PC-3 (cell line): ENCODE measurements at regions of chr20 and their contacts with region 1.

Region 1: DNA sequence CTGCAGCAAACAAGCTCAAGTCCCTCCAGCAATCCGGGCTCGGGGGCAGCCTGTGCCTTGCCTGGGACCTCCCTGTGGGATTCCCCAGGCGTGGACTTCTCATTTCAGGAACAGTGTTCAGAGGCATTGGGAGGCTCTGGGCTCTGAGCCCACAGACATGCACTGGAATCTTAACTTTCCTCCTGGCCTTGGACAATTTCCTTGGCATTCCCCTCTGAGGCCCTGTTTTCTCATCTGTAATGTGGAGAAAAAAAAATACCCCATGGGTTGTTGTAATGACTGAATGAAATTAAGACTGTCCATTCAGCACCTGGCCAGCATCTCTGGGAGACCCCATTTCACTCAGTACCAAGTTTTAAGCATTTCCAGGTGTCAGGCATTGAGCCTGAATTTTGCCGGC is 17.6 kb downstream of the BPIFB4 start:
- DNase-seq: no peak
- ATAC-seq: no peak
- H3K4me3 ChIP-seq: no peak overlapping the region
- H3K27ac ChIP-seq: no peak overlapping the region
- H3K4me1 ChIP-seq: no peaks in the 10 kb centered on the region
- H3K27me3 ChIP-seq: peaks cover 6% of the 10 kb centered on the region; the same call in 1 of the 2 replicates
- CTCF ChIP-seq: no peak

Region 2: DNA sequence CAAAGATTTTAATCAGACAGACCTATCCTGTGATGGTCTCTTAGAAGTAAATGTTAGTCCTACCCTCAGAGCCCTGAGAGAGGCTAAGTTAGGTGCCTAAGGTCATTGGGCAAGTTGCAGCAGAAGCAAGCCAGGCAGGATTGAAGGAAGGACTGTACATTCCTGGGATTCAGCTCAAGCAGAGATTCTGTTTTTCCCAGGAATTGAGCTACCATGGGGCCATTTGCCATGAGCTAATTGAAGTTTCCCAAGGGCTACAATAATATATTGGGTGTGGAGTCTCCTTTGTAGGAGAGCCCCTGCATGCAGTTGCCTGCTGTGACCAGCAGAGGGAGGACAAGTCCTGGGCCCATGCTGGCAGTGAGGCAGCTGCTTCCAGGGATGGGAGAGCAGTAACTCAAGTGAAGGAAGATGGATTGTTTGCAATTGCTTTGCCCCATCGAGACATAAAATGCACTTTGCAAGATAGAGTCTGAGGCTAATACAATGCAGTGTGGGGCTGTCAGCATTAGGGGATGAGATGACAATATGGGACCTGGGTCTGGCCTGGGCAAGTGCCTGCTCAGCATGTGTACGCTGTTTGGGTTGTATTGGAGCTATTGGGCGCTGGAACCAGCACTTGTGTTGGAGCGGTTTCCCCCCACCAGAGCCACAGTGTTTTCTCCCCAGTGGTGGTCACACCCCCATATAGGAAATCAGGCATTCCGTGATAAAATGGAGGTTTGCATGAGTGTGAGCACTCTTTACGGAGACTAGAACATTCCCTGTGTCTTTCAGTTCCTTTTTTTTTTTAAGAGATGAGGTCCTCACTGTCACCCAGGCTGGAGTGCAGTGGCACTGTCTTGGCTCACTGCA is 306.9 kb before region 1 on chr20:
- CTCF ChIA-PET with region 1: no interaction called
- POLR2A ChIA-PET with region 1: no interaction called
- intact Hi-C with region 1: loop called (anchors 10 kb)
- DNase-seq: peak; percentile 79
- ATAC-seq: peak; percentile 100
- H3K4me3 ChIP-seq: no peak overlapping the region
- H3K27ac ChIP-seq: no peak overlapping the region
- H3K4me1 ChIP-seq: no peaks in the 10 kb centered on the region
- H3K27me3 ChIP-seq: no peaks in the 10 kb centered on the region
- CTCF ChIP-seq: peak; percentile 97

Region 3: GRCh38 chr20:33211817-33212424 is 114.9 kb after region 1 on chr20:
- CTCF ChIA-PET with region 1: interaction called, 4 read pairs
- POLR2A ChIA-PET with region 1: no interaction called
- intact Hi-C with region 1: loop called (anchors 1 kb)
- DNase-seq: peak; percentile 69
- ATAC-seq: peak; percentile 84
- H3K4me3 ChIP-seq: no peak overlapping the region
- H3K27ac ChIP-seq: no peak overlapping the region
- H3K4me1 ChIP-seq: no peaks in the 10 kb centered on the region
- H3K27me3 ChIP-seq: peaks cover 48% of the 10 kb centered on the region
- CTCF ChIP-seq: peak; percentile 78